IMR-90 (cell line): ENCODE measurements at regions of chr5 and their contacts with region 1.

Region 1: GRCh38 chr5:36507332-36507952 is 99.0 kb upstream of the SLC1A3 start:
- DNase-seq: peak; percentile 57
- ATAC-seq: peak; percentile 68; the same call in 1 of the 2 replicates
- H3K4me3 ChIP-seq: no peak overlapping the region
- H3K27ac ChIP-seq: no peak overlapping the region
- H3K4me1 ChIP-seq: peaks cover 3% of the 10 kb centered on the region; the same call in 1 of the 2 replicates
- H3K27me3 ChIP-seq: peaks cover 5% of the 10 kb centered on the region; the same call in 1 of the 2 replicates
- CTCF ChIP-seq: peak; percentile 78
- POLR2A ChIP-seq: no peak
- RAD21 ChIP-seq: peak; percentile 64

Region 2: GRCh38 chr5:35963381-35963843 is 544.0 kb before region 1 on chr5:
- CTCF ChIA-PET with region 1: no interaction called
- POLR2A ChIA-PET with region 1: no interaction called
- dilution Hi-C with region 1: no loop called
- in situ Hi-C with region 1: no loop called
- intact Hi-C with region 1: loop called (anchors 10 kb)
- DNase-seq: peak; percentile 20
- ATAC-seq: no peak; the same call in 1 of the 2 replicates
- H3K4me3 ChIP-seq: no peak overlapping the region
- H3K27ac ChIP-seq: no peak overlapping the region
- H3K4me1 ChIP-seq: no peaks in the 10 kb centered on the region
- H3K27me3 ChIP-seq: peaks cover 4% of the 10 kb centered on the region
- CTCF ChIP-seq: peak; percentile 60
- POLR2A ChIP-seq: no peak
- RAD21 ChIP-seq: peak; percentile 50

Region 3: GRCh38 chr5:36264202-36264760 is 243.2 kb before region 1 on chr5:
- CTCF ChIA-PET with region 1: no interaction called
- POLR2A ChIA-PET with region 1: no interaction called
- dilution Hi-C with region 1: no loop called
- in situ Hi-C with region 1: no loop called
- intact Hi-C with region 1: loop called (anchors 1 kb)
- DNase-seq: no peak
- ATAC-seq: no peak
- H3K4me3 ChIP-seq: no peak overlapping the region
- H3K27ac ChIP-seq: no peak overlapping the region
- H3K4me1 ChIP-seq: no peaks in the 10 kb centered on the region
- H3K27me3 ChIP-seq: peaks cover 1% of the 10 kb centered on the region; the same call in 1 of the 2 replicates
- CTCF ChIP-seq: no peak
- POLR2A ChIP-seq: no peak
- RAD21 ChIP-seq: no peak

Region 4: GRCh38 chr5:36414869-36415282 is 92.6 kb before region 1 on chr5:
- CTCF ChIA-PET with region 1: interaction called, 14 read pairs
- POLR2A ChIA-PET with region 1: no interaction called
- dilution Hi-C with region 1: no loop called
- in situ Hi-C with region 1: loop called (anchors 10 kb)
- intact Hi-C with region 1: loop called (anchors 1 kb)
- DNase-seq: peak; percentile 54
- ATAC-seq: peak; percentile 72
- H3K4me3 ChIP-seq: no peak overlapping the region
- H3K27ac ChIP-seq: no peak overlapping the region
- H3K4me1 ChIP-seq: no peaks in the 10 kb centered on the region
- H3K27me3 ChIP-seq: peaks cover 13% of the 10 kb centered on the region
- CTCF ChIP-seq: peak; percentile 67
- POLR2A ChIP-seq: no peak
- RAD21 ChIP-seq: peak; percentile 78